GM12878 (cell line): ENCODE measurements at regions of chr19 and their contacts with region 1.

Region 1: GRCh38 chr19:44764975-44765948 is 12.4 kb upstream of the CBLC start:
- DNase-seq: no peak
- ATAC-seq: no peak
- H3K4me3 ChIP-seq: no peak overlapping the region
- H3K27ac ChIP-seq: no peak overlapping the region
- H3K4me1 ChIP-seq: peaks cover 20% of the 10 kb centered on the region
- H3K27me3 ChIP-seq: no peaks in the 10 kb centered on the region
- CTCF ChIP-seq: no peak
- EP300 ChIP-seq: no peak
- POLR2A ChIP-seq: no peak
- RAD21 ChIP-seq: no peak

Region 2: GRCh38 chr19:44689056-44689895 is 76.0 kb before region 1 on chr19:
- CTCF ChIA-PET with region 1: interaction called, 155 read pairs
- POLR2A ChIA-PET with region 1: interaction called, 6 read pairs
- RAD21 ChIA-PET with region 1: interaction called, 84 read pairs
- SMC1A ChIA-PET with region 1: interaction called, 72 read pairs
- in situ Hi-C with region 1: no loop called
- intact Hi-C with region 1: loop called (anchors 1 kb)
- DNase-seq: no peak
- ATAC-seq: peak; percentile 54
- H3K4me3 ChIP-seq: no peak overlapping the region
- H3K27ac ChIP-seq: no peak overlapping the region
- H3K4me1 ChIP-seq: peaks cover 44% of the 10 kb centered on the region
- H3K27me3 ChIP-seq: no peaks in the 10 kb centered on the region
- CTCF ChIP-seq: peak; percentile 89 to 98 (median 92)
- EP300 ChIP-seq: no peak
- POLR2A ChIP-seq: no peak
- RAD21 ChIP-seq: peak; percentile 82